Endothelial cell of umbilical vein (primary cell): ENCODE measurements at regions of chr1 and their contacts with region 1.

Region 1: GRCh38 chr1:165073185-165074007 is 283.1 kb downstream of the LMX1A start:
- DNase-seq: peak; percentile 57
- H3K4me3 ChIP-seq: no peak overlapping the region
- H3K27ac ChIP-seq: no peak overlapping the region
- H3K4me1 ChIP-seq: no peaks in the 10 kb centered on the region
- H3K27me3 ChIP-seq: no peaks in the 10 kb centered on the region
- CTCF ChIP-seq: peak; percentile 29 to 52
- POLR2A ChIP-seq: no peak

Region 2: DNA sequence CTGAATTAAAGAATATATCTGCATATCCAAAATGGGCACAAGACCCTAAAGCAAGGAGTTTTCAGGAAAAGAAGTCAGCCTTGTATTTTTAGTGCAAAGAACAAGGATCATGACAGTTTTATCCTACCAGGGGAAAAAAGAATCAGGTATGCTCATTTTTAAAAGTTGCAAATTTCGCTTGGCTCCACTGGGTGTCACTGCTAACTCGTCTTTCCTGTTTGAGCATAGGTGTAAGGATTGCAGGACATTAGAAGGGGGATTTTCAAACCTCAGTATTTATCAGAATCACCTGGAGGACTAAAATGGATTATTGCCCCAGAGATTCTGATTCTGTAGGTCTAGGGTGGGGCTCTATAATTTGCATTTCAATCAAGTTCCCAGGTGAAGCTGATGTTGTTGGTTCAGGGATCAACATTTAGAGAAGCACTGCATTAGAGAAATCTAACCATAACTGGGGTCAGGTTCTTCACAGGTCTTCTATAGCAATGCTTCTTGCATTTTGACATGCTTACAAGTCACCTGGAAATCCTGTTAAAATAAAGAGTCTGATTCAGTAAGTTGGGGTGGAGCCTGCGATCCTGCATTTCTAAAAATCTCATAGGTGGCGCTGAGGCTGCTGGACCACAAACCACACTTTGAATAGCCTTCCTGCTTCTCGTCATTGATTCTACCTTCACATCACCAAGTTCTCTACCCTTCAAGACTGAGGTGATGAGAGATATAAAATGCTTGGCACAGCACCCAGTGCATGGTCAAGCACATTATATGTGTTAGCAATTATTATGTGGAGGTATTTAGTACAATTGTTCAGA is 1712.1 kb before region 1 on chr1:
- CTCF ChIA-PET with region 1: interaction called, 44 read pairs
- POLR2A ChIA-PET with region 1: no interaction called
- dilution Hi-C with region 1: no loop called
- intact Hi-C with region 1: loop called (anchors 1 kb)
- DNase-seq: no peak
- H3K4me3 ChIP-seq: no peak overlapping the region
- H3K27ac ChIP-seq: no peak overlapping the region
- H3K4me1 ChIP-seq: no peaks in the 10 kb centered on the region
- H3K27me3 ChIP-seq: peaks cover 5% of the 10 kb centered on the region in 2 experiments
- CTCF ChIP-seq: no peak
- POLR2A ChIP-seq: no peak

Region 3: DNA sequence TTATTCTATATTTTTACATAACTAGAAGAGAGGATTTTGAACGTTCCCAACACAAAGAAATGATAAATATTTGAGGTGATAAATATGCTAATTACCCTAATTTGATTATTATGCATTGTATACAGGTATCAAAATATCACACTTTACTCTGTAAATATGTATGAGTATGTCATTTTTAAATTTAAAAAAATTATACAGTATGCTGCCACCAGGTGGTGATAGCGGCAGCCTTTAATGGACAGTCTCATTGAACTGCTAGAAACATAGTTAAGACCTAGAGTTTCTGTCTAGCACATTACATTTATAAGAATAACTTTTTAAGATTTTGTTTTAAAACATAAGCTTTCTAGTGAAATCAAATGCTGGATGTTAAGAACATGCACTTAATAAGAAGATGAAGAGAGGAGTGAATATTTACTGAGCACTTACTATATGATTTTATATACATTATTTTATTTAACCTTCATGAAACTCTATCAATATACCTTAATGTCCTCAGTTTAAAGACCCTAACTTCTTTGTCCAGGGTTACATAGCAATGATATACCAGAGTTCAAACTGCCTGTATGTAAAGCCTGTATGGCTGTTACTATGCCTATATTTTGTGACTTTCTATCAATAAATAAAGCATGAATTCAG is 1544.6 kb before region 1 on chr1:
- CTCF ChIA-PET with region 1: interaction called, 5 read pairs
- POLR2A ChIA-PET with region 1: no interaction called
- dilution Hi-C with region 1: no loop called
- intact Hi-C with region 1: loop called (anchors 1 kb)
- DNase-seq: peak; percentile 48
- H3K4me3 ChIP-seq: no peak overlapping the region
- H3K27ac ChIP-seq: no peak overlapping the region
- H3K4me1 ChIP-seq: no peaks in the 10 kb centered on the region
- H3K27me3 ChIP-seq: no peaks in the 10 kb centered on the region
- CTCF ChIP-seq: peak; percentile 21 to 34
- POLR2A ChIP-seq: no peak

Region 4: GRCh38 chr1:163561580-163562295 is 1511.7 kb before region 1 on chr1:
- CTCF ChIA-PET with region 1: interaction called, 11 read pairs
- POLR2A ChIA-PET with region 1: no interaction called
- dilution Hi-C with region 1: no loop called
- intact Hi-C with region 1: no loop called
- DNase-seq: peak; percentile 27
- H3K4me3 ChIP-seq: no peak overlapping the region
- H3K27ac ChIP-seq: no peak overlapping the region
- H3K4me1 ChIP-seq: no peaks in the 10 kb centered on the region
- H3K27me3 ChIP-seq: no peaks in the 10 kb centered on the region
- CTCF ChIP-seq: peak; percentile 17 to 18
- POLR2A ChIP-seq: no peak

Region 5: DNA sequence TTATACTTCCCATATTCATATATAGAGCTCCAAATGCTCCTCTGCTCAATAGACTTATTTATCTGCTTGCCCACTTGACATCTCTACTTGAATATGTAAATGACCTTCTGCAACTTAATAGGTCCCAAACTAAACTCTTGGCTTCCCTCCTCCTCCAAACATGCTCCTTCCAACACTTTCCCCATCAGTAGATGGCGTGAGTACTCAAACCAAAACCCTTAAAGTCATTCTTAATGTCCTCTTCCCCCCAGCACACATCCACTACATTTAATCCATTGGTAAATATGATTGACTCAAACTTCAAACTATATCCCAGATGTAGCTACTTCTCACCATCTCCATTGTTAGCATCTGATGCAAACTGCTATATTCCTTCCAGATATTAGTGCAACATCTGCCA is 563.0 kb before region 1 on chr1:
- CTCF ChIA-PET with region 1: no interaction called
- POLR2A ChIA-PET with region 1: no interaction called
- dilution Hi-C with region 1: no loop called
- intact Hi-C with region 1: no loop called
- DNase-seq: peak; percentile 15
- H3K4me3 ChIP-seq: no peak overlapping the region
- H3K27ac ChIP-seq: no peak overlapping the region
- H3K4me1 ChIP-seq: no peaks in the 10 kb centered on the region
- H3K27me3 ChIP-seq: no peaks in the 10 kb centered on the region
- CTCF ChIP-seq: no peak
- POLR2A ChIP-seq: no peak

Region 6: DNA sequence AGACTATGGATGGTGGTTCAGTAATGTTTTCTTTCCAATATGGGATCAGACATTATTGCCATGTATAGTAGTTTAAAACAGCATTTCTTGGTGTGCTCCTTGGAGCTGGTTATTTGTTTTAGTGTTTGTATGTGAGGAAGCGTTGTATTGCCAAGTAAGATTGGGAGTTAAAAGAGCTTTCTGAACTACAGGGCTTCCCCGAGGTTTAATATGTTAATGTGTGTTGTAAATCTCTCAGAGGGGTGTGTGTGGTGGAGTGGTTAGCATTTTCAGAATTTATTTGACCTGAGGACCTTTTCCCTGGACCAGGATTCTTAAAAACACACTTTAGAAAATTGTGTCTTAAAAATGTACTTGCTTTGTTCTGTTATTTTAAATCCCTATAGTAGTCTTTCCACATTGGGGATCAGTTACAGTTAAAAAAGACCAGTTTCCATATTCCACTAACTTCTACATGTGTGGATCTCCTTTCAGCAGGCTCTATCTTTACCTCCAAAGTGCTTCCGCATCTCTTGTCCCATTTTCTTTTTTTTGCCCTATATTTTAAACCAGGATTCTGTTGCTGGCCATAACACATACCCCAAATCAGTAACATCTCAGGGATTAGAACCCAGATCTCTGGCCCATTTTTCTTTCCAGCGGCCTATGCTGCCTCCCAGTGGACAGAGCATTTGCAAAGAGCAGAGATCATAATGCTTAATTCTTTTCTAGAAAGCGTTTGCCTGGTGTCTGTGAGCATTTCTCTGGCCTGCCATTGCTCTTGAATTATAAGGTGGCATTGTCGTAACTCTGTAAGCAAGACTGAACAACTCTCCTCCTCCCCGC is 455.8 kb before region 1 on chr1:
- CTCF ChIA-PET with region 1: no interaction called
- POLR2A ChIA-PET with region 1: no interaction called
- dilution Hi-C with region 1: no loop called
- intact Hi-C with region 1: loop called (anchors 5 kb)
- DNase-seq: peak; percentile 32
- H3K4me3 ChIP-seq: no peak overlapping the region
- H3K27ac ChIP-seq: no peak overlapping the region
- H3K4me1 ChIP-seq: peaks cover 10% of the 10 kb centered on the region
- H3K27me3 ChIP-seq: no peaks in the 10 kb centered on the region
- CTCF ChIP-seq: peak; percentile 38 to 46
- POLR2A ChIP-seq: no peak

Region 7: GRCh38 chr1:164630626-164631396 is 442.6 kb before region 1 on chr1:
- CTCF ChIA-PET with region 1: no interaction called
- POLR2A ChIA-PET with region 1: no interaction called
- dilution Hi-C with region 1: no loop called
- intact Hi-C with region 1: no loop called
- DNase-seq: no peak
- H3K4me3 ChIP-seq: no peak overlapping the region
- H3K27ac ChIP-seq: no peak overlapping the region
- H3K4me1 ChIP-seq: no peaks in the 10 kb centered on the region
- H3K27me3 ChIP-seq: no peaks in the 10 kb centered on the region
- CTCF ChIP-seq: no peak
- POLR2A ChIP-seq: no peak

Region 8: GRCh38 chr1:164841702-164842465 is 231.5 kb before region 1 on chr1:
- CTCF ChIA-PET with region 1: no interaction called
- POLR2A ChIA-PET with region 1: no interaction called
- dilution Hi-C with region 1: no loop called
- intact Hi-C with region 1: no loop called
- DNase-seq: no peak
- H3K4me3 ChIP-seq: no peak overlapping the region
- H3K27ac ChIP-seq: no peak overlapping the region
- H3K4me1 ChIP-seq: no peaks in the 10 kb centered on the region
- H3K27me3 ChIP-seq: no peaks in the 10 kb centered on the region
- CTCF ChIP-seq: no peak
- POLR2A ChIP-seq: no peak

Region 9: DNA sequence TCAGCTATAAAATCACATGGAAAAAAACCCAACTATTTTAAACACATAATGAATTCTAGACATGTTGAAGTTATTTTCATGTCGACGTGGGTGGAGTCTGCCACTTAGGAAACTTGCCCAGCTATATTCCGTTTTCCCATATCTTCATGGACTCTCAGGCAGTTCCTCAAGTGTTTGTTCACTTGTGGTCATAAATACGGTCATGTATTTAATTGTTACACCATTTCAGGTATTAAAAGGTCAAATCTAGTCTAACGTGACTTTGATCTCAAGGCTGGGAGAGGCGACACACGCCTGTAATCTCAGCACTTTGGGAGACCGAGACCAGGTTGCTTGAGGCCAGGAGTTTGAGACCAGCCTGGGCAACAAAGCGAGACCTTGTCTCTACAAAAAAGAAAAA is 167.5 kb before region 1 on chr1:
- CTCF ChIA-PET with region 1: no interaction called
- POLR2A ChIA-PET with region 1: no interaction called
- dilution Hi-C with region 1: no loop called
- intact Hi-C with region 1: no loop called
- DNase-seq: no peak
- H3K4me3 ChIP-seq: no peak overlapping the region
- H3K27ac ChIP-seq: no peak overlapping the region
- H3K4me1 ChIP-seq: no peaks in the 10 kb centered on the region
- H3K27me3 ChIP-seq: no peaks in the 10 kb centered on the region
- CTCF ChIP-seq: no peak
- POLR2A ChIP-seq: no peak